ENCODE measurements at regions of chr19 and their contacts with region 1.

Region 1: GRCh38 chr19:47713046-47714021 is at the start of gene EHD2:
- DNase-seq: peak; percentile 57
- ATAC-seq: peak; percentile 88
- H3K4me3 Mint-ChIP-seq: peak within 1 kb of the TSS; percentile 16
- H3K27ac Mint-ChIP-seq: no peak within 1 kb of the TSS
- H3K4me1 Mint-ChIP-seq: peaks cover 2% of the 10 kb centered on the region
- H3K27me3 Mint-ChIP-seq: peaks cover 32% of the 10 kb centered on the region
- CTCF ChIP-seq: peak; percentile 94
- total RNA-seq, gene EHD2: 1.1 to 1.4 TPM

Region 2: DNA sequence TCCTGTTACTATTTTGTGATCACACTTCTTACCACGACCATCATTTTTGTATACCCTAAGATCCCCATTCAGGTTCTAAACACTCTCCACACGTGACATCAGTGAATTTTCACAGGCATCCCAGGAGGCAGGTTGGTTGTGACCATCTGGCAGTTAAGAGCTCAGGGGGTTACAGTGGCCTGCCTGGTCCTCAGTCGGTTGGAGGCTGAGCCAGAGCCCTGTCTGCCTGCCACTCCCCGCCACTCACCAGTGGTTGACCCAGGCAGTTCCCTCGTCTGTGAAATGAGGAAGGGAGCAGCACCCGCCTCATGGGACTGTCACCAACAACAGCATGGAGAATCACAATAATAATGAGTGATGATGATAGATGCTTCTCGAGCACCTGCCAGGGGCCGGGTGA is 36.5 kb before region 1 on chr19:
- CTCF ChIA-PET with region 1: no interaction called
- POLR2A ChIA-PET with region 1: no interaction called
- intact Hi-C with region 1: no loop called
- DNase-seq: no peak
- ATAC-seq: no peak
- H3K4me3 Mint-ChIP-seq: no peak overlapping the region
- H3K27ac Mint-ChIP-seq: no peak overlapping the region
- H3K4me1 Mint-ChIP-seq: no peaks in the 10 kb centered on the region
- H3K27me3 Mint-ChIP-seq: no peaks in the 10 kb centered on the region
- CTCF ChIP-seq: no peak

Region 3: GRCh38 chr19:47697863-47698609 is 15.3 kb before region 1 on chr19:
- CTCF ChIA-PET with region 1: interaction called, 27 read pairs
- POLR2A ChIA-PET with region 1: interaction called, 3 read pairs
- intact Hi-C with region 1: no loop called
- DNase-seq: peak; percentile 69
- ATAC-seq: peak; percentile 87
- H3K4me3 Mint-ChIP-seq: no peak overlapping the region
- H3K27ac Mint-ChIP-seq: no peak overlapping the region
- H3K4me1 Mint-ChIP-seq: no peaks in the 10 kb centered on the region
- H3K27me3 Mint-ChIP-seq: no peaks in the 10 kb centered on the region
- CTCF ChIP-seq: peak; percentile 96

Region 4: GRCh38 chr19:47729992-47730889 is 16.9 kb after region 1 on chr19:
- CTCF ChIA-PET with region 1: interaction called, 168 read pairs
- POLR2A ChIA-PET with region 1: interaction called, 4 read pairs
- intact Hi-C with region 1: no loop called
- DNase-seq: peak; percentile 72
- ATAC-seq: peak; percentile 88
- H3K4me3 Mint-ChIP-seq: peak overlapping the region; percentile 67
- H3K27ac Mint-ChIP-seq: no peak overlapping the region
- H3K4me1 Mint-ChIP-seq: peaks cover 20% of the 10 kb centered on the region
- H3K27me3 Mint-ChIP-seq: peaks cover 29% of the 10 kb centered on the region
- CTCF ChIP-seq: no peak

Measured in activated CD8-positive, alpha-beta T cell treated with anti-CD3 and anti-CD28 coated beads for 36 hours (primary cell).